CD8-positive, alpha-beta T cell (primary cell): ENCODE measurements at regions of chr9 and their contacts with region 1.

Region 1: DNA sequence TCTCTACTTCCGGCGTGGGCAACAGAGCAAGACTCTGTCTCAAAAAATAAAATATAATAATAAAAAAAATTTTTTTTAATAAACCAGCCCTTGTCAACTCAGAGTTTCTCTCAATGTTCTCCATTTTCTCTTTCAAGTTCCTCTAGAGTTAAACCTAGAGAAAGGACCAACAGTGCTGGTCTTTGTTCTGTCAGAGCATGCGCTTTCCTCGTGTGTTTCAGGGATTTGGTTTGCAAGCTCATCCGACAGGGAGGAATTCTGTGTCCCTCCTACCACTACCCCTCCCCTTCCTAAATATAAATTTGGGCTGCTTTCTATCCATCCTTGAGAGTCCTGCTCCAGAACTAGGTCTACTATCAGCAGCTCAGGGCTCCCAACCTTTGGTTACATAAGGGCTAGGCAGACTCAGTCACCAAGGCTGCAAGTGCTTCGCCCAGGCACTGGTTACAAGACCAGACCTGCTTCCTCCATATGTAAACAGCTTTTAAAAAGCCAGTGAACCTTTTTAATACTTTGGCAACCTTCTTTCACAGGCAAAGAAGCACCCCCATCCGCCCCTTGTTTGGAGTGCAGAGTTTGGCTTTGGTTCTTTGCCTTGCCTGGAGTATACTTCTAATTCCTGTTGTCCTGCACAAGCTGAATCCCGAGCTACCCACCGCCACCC is 13.5 kb downstream of the SETX start:
- DNase-seq: no peak
- ATAC-seq: no peak
- H3K4me3 ChIP-seq: no peak overlapping the region
- H3K4me3 Mint-ChIP-seq: no peak overlapping the region
- H3K27ac ChIP-seq: no peak overlapping the region
- H3K27ac Mint-ChIP-seq: no peak overlapping the region
- H3K4me1 ChIP-seq: no peaks in the 10 kb centered on the region
- H3K4me1 Mint-ChIP-seq: peaks cover 22% of the 10 kb centered on the region
- H3K27me3 ChIP-seq: no peaks in the 10 kb centered on the region
- H3K27me3 Mint-ChIP-seq: no peaks in the 10 kb centered on the region
- CTCF ChIP-seq: no peak

Region 2: DNA sequence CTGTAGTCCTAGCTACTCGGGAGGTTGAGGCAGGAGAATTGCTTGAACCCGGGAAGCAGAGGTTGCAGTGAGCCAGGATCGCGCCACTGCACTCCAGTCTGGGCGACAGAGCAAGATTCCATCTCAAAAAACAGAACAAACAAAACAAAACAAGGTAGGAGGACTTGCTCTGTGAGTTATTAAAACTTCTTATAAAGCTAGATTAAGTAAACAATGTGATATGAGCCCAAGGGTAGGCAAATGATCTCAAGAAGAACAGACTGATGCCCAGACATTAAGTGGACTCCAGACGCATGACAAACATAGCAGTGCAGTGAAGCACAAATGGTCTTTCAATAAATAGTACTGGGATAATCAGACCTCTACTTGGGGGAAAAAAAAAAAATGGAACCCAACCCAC is 32.3 kb before region 1 on chr9:
- CTCF ChIA-PET with region 1: no interaction called
- POLR2A ChIA-PET with region 1: no interaction called
- intact Hi-C with region 1: loop called in 1 of 2 experiments (anchors 5 kb)
- DNase-seq: no peak
- ATAC-seq: no peak
- H3K4me3 ChIP-seq: no peak overlapping the region
- H3K4me3 Mint-ChIP-seq: no peak overlapping the region
- H3K27ac ChIP-seq: no peak overlapping the region
- H3K27ac Mint-ChIP-seq: no peak overlapping the region
- H3K4me1 ChIP-seq: no peaks in the 10 kb centered on the region
- H3K4me1 Mint-ChIP-seq: peaks cover 45% of the 10 kb centered on the region
- H3K27me3 ChIP-seq: no peaks in the 10 kb centered on the region
- H3K27me3 Mint-ChIP-seq: no peaks in the 10 kb centered on the region
- CTCF ChIP-seq: no peak

Region 3: DNA sequence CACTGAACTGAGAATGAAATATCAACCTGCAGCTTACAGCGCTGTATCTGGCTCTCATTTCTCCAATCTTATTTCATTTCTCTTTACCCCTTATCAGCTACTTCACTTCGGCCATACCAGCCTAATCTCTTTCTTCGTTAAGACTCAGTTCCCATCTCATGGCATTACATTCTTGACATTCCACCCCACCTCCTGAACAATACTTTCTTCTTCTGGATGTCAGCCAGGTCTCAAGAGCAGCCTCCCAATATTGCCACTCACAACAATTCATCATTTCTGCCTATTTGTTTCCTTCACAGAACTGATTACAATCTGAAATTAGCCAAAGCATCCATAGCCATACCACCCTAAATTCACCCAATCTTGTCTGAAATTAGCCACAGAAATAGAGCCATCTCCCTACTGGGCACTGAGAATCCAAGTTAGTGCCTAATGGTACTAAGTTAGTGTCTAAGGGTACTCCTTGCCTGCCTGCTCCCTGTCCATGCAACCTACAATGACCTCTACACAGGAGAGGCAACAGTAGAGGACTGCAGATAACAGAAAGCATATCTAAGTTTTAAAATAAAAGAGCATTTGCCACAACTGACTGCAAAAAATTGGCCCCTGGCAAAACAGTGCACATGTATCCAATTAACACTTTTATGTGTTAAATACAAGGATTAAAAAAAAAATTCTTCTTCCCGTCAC is 21.7 kb before region 1 on chr9:
- CTCF ChIA-PET with region 1: no interaction called
- POLR2A ChIA-PET with region 1: no interaction called
- intact Hi-C with region 1: no loop called
- DNase-seq: no peak
- ATAC-seq: no peak
- H3K4me3 ChIP-seq: no peak overlapping the region
- H3K4me3 Mint-ChIP-seq: no peak overlapping the region
- H3K27ac ChIP-seq: no peak overlapping the region
- H3K27ac Mint-ChIP-seq: peak overlapping the region; percentile 69
- H3K4me1 ChIP-seq: peaks cover 7% of the 10 kb centered on the region
- H3K4me1 Mint-ChIP-seq: peaks cover 46% of the 10 kb centered on the region
- H3K27me3 ChIP-seq: no peaks in the 10 kb centered on the region
- H3K27me3 Mint-ChIP-seq: no peaks in the 10 kb centered on the region
- CTCF ChIP-seq: no peak